ENCODE measurements at regions of chr13 and their contacts with region 1.

Region 1: GRCh38 chr13:111066544-111066943 is 48.6 kb upstream of the ARHGEF7 start:
- DNase-seq: no peak
- H3K4me3 ChIP-seq: peak overlapping the region in 1 of 4 donors; percentile 53
- H3K27ac ChIP-seq: no peak overlapping the region
- H3K4me1 ChIP-seq: peaks cover 0 to 9% (median 2%) of the 10 kb centered on the region in 4 donors
- H3K27me3 ChIP-seq: peaks cover 0 to 11% (median 0%) of the 10 kb centered on the region in 3 donors
- CTCF ChIP-seq: no peak
- EP300 ChIP-seq: no peak
- POLR2A ChIP-seq: no peak

Region 2: GRCh38 chr13:111049802-111050538 is 16.6 kb before region 1 on chr13:
- intact Hi-C with region 1: no loop called
- DNase-seq: no peak
- H3K4me3 ChIP-seq: no peak overlapping the region
- H3K27ac ChIP-seq: no peak overlapping the region
- H3K4me1 ChIP-seq: peaks cover 0 to 6% (median 0%) of the 10 kb centered on the region in 4 donors
- H3K27me3 ChIP-seq: no peaks in the 10 kb centered on the region
- CTCF ChIP-seq: peak in 3 of 4 experiments; percentile 20 to 51 (median 41)
- EP300 ChIP-seq: no peak
- POLR2A ChIP-seq: no peak

Region 3: DNA sequence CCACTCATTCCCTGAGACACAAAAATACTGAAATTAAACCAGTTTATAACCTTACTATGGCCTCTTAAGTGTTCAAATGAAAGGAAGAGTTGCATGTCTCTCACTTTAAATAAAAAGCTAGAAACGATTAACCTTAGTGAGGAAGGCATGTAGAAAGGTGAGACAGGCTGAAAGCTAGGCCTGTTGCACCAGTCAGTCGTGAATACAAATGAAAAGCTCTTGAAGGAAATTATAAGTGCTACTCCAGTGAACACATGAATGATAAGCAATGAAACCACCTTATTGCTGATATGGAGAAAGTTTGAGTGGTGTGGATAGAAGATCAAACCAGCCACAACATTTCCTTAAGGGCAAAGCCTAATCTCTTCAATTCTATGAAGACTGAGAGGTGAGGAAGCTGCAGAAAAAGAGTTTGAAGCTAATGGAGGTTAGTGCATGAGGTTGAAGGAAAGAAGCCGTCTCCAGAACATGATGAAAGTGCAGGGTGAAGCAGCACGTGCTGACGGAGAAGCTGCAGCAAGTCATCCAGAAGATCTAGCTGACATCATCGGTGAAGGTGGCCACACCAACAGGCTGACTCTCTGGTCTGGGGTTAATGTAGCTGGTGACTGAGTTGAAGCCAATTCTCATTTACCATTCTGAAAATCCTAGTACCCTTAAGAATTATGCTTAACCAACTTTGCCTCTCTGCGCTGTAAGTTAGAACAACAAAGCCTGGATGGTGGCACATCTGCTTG is 159.4 kb after region 1 on chr13:
- intact Hi-C with region 1: loop called (anchors 2 kb)
- DNase-seq: no peak
- H3K4me3 ChIP-seq: no peak overlapping the region
- H3K27ac ChIP-seq: no peak overlapping the region
- H3K4me1 ChIP-seq: peaks cover 0 to 10% (median 3%) of the 10 kb centered on the region in 4 donors
- H3K27me3 ChIP-seq: no peaks in the 10 kb centered on the region
- CTCF ChIP-seq: no peak
- EP300 ChIP-seq: no peak
- POLR2A ChIP-seq: no peak

Region 4: DNA sequence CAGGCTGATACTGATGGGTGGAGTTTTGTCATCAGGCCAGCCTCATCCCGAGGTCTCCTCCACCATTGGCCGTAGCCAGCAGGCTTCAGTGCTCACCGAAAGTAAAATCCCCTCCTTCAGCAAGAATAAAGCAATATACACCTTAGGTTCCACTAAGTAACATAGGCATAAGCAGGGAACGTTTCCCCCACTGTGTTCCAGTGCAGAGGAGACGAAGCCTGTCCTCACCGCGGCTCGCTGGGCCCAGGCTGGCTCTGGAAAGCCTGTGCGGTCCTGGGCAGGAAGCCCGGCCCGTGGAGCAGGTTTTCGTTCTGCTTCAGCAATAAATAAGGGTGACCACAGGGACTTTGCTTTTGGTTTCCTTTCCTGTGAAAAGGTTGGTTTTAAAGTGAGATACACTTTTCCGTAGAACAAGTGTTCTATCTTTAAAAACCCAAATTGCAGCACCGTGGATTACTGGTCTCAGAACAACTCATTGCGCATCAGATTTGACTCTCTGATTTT is 237.5 kb after region 1 on chr13:
- intact Hi-C with region 1: no loop called
- DNase-seq: no peak
- H3K4me3 ChIP-seq: no peak overlapping the region
- H3K27ac ChIP-seq: no peak overlapping the region
- H3K4me1 ChIP-seq: no peaks in the 10 kb centered on the region
- H3K27me3 ChIP-seq: no peaks in the 10 kb centered on the region
- CTCF ChIP-seq: no peak
- EP300 ChIP-seq: no peak
- POLR2A ChIP-seq: no peak